ENCODE measurements at regions of chr20 and their contacts with region 1.

Region 1: DNA sequence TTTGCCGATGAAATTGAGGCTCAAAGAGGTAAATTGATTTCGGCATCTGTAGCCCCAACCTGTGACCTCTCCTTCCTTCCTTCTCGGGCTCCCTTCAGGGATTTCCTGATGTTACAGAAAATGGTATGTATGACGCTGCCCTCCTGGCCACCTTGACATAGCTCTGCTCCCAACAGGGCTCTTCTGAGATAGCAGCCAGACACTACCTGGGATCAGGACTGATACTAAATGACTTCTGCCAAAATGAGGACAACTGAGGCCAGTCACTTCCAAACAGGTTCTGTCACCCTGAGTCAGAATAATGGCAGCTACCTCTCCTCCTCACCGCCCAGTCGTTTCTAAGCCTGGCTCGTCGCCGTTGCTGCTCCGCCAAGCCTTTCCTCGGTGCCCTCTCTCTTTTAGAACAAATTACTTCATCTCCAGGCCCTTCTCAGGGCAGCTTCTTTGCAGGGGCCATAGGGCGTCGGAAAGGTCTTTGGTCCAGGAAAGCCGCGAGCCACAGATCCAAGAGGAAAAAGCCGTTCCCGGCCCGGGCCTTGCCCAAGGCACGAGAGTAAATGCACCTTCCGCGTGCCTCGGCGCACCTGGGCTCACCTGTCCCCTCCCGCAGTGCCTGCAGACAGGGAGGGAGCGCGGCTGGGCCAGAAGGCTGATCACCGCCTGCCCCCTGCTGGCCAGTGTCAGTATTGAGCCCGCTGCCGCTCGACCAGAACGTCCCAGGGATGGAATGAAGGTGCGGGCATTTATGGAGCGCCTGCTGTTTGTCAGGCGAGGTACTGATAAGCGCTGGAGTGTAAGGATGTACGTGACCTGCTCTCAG is 904 bp upstream of the LPIN3 start:
- DNase-seq: peak; percentile 93
- ATAC-seq: peak; percentile 83

Region 2: GRCh38 chr20:40293740-40294139 is 1046.0 kb before region 1 on chr20:
- intact Hi-C with region 1: no loop called
- DNase-seq: no peak
- ATAC-seq: peak; percentile 90

Region 3: GRCh38 chr20:41173161-41173721 is 166.5 kb before region 1 on chr20:
- intact Hi-C with region 1: loop called (anchors 2 kb)
- DNase-seq: peak; percentile 92
- ATAC-seq: peak; percentile 94

Region 4: DNA sequence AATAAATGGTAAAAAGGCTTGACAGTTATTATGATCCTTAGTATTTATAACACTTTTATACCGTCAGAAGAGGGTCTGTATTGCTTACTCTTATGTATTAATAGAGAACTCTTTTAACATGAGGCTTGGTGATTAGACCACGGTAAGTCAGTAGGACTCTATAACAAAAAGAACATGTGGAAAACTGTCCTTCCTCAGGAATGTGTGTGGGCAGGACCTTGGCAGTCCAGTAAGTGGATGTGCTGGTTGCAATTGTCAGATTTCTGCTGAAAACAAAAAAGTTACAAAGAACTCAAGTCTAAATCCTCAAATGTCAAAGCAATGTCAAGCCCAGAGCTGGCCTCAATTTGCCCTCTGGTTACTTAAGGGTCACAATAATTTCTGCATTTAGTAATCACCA is 121.3 kb before region 1 on chr20:
- intact Hi-C with region 1: no loop called
- DNase-seq: no peak
- ATAC-seq: peak; percentile 71

Region 5: DNA sequence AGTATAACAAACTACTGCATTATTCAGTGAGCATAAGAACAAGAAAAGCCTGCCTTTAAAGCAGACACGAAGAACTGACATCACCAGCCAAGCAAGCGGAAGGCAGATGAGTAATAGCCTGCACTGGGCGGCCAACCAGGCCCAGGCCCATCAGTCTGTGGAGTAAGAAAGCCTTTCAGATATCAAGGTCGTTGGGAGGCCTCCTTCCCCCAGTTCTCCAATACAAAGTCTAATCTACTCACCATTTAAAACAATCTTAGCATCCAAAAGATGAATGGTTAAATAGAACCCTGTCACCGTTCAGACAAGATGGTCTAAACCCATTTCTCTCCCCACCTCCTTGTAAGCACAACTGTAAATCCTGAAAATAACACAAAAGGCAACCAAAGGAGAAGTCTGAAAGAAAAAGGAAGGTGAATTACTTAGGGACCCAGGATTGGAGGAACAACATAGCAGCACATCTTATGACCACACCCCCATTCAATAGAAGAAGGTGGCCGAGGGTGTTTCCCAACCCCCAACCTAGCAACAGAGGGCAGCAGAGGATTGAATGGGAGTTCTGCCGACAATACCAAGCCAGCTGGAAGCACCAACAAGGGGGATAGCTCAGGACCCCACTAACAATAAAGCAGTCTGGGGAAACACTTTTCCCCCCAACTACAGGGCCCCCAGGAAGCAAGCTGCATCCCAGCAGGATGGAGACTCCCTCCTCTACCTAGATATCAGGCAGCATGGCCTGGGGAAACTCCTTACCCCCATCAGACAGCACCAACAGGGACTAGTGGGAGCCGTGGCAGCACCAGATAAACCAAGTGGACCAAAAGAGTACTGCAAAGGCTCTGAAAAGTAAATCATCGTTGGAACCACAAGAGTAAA is 90.1 kb before region 1 on chr20:
- intact Hi-C with region 1: loop called (anchors 10 kb)
- DNase-seq: no peak
- ATAC-seq: peak; percentile 80

Region 6: DNA sequence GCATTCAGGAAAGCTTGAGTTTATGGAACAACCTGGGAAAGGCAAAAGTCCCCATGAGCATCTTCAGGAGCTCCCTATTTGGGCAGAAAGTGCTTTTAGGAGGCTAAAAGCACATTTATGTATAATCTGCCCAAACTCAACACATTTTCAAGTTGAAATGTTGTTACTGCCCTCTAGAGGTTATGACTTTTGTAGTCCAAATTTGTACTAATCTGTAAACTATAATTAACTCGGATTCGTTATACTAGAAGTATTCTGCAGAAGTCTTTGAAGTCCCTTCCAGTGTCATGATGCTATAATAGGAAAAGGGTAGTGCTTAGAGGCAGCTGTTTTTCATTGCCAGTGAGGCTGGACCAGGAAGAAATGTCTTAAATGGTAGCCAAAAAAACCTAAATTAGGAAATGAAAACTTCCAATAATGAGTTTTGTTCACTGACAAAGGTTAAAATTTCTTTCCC is 71.7 kb after region 1 on chr20:
- intact Hi-C with region 1: loop called (anchors 10 kb)
- DNase-seq: no peak
- ATAC-seq: peak; percentile 66